ENCODE measurements at regions of chr4 and their contacts with region 1.

Region 1: DNA sequence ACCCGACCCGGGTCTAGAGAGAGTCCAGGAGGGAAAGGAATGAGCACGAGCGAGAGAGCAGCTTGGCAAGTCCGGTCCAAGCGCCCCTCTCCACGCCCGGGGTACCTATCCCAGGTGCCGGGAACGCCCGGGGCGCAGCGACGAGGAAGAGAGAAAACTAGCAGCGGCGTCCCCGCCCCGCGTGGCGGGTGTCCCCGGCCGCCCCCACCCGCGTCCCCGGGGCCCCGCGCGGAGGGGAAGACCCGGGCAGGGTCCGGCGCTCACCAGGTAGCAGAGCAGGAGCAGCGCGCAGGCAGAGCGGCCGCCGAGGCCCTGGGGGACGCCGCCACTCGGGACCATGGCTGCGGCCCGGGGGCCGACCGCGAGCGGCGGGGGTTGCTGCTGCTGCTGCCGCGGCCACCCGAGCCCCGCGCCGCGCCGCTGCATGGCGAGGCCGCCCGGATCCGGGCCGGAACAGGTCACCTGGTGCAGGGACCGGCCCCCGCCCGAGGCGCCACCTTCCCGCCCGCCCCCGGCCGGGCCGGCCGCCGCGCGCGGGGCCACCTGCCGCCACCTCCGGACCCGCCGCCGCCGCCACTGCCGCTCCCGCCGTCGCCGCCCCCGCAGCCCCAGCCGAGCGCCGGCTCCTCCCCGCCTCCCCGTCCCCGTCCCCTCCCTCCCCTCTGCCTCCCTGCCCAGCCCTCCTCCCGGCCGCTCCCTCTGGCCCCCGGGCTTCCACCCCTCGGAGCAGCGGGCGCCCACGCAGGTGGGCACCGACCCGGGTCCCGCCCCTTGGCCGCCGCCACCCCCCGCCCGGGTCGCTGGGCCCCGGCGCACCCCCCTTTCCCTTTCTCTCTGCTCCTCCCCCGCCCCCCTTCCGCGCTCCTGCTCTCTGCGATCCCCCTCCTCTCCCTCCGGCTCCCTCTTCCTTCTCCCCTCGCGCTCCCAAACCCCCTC is at the start of gene SEL1L3:
- DNase-seq: peak; percentile 67
- H3K4me3 ChIP-seq: peak within 1 kb of the TSS; percentile 75
- H3K27ac ChIP-seq: peak within 1 kb of the TSS; percentile 99
- H3K4me1 ChIP-seq: peaks cover 69% of the 10 kb centered on the region
- CTCF ChIP-seq: no peak
- total RNA-seq, gene SEL1L3: 173 and 180 TPM in 2 replicates

Region 2: GRCh38 chr4:25875281-25875745 is 12.6 kb after region 1 on chr4:
- CTCF ChIA-PET with region 1: interaction called, 10 read pairs
- POLR2A ChIA-PET with region 1: interaction called, 134 read pairs
- intact Hi-C with region 1: loop called (anchors 1 kb)
- DNase-seq: peak; percentile 96
- H3K4me3 ChIP-seq: peak overlapping the region; percentile 49
- H3K27ac ChIP-seq: peak overlapping the region; percentile 99
- H3K4me1 ChIP-seq: peaks cover 100% of the 10 kb centered on the region
- CTCF ChIP-seq: no peak

Region 3: GRCh38 chr4:25884031-25884782 is 21.5 kb after region 1 on chr4:
- CTCF ChIA-PET with region 1: interaction called, 10 read pairs
- POLR2A ChIA-PET with region 1: interaction called, 134 read pairs
- intact Hi-C with region 1: no loop called
- DNase-seq: peak; percentile 60
- H3K4me3 ChIP-seq: no peak overlapping the region
- H3K27ac ChIP-seq: no peak overlapping the region
- H3K4me1 ChIP-seq: peaks cover 53% of the 10 kb centered on the region
- CTCF ChIP-seq: no peak

Region 4: GRCh38 chr4:25913851-25914669 is 51.4 kb after region 1 on chr4 and contains the start of gene SMIM20:
- CTCF ChIA-PET with region 1: interaction called, 4 read pairs
- POLR2A ChIA-PET with region 1: interaction called, 43 read pairs
- intact Hi-C with region 1: loop called (anchors 1 kb)
- DNase-seq: peak; percentile 93
- H3K4me3 ChIP-seq: peak within 1 kb of the TSS; percentile 74
- H3K27ac ChIP-seq: peak within 1 kb of the TSS; percentile 78
- H3K4me1 ChIP-seq: peaks cover 26% of the 10 kb centered on the region
- CTCF ChIP-seq: no peak
- total RNA-seq, gene SMIM20: 33.4 and 44.0 TPM in 2 replicates

Region 5: DNA sequence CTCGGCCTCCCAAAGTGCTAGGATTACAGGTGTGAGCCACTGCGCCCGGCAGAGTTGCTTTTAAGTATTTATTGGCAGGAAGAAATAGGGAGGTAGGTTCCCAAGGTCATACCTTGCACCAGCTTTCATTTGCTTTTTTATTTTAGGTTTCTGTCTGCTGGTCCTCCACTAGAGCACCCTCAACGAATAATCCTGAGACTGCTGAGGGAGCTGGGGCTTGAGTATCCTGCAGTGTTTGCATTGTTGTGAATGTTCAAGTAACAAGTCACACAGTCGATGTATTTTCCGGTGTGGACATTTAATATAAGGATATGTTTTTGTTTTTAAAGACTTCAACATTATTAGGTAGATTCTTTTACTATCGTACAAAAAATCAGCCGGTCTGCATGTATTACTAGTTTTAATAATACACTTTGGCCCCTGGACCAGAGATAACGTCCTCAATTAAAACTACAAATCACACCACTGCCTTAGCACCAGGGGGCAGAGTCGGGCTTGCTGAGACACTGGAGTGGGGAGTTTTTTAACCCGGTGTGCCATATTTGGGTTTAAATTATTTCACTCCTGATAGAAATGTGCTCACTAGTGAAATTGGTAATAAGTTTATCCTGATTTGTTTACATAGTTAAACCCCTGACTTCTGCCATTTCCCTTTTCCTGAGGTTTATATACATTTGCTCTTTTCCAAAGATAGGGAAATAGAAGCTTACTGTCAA is 63.0 kb after region 1 on chr4:
- CTCF ChIA-PET with region 1: no interaction called
- POLR2A ChIA-PET with region 1: interaction called, 15 read pairs
- intact Hi-C with region 1: no loop called
- DNase-seq: peak; percentile 59
- H3K4me3 ChIP-seq: no peak overlapping the region
- H3K27ac ChIP-seq: no peak overlapping the region
- H3K4me1 ChIP-seq: peaks cover 18% of the 10 kb centered on the region
- CTCF ChIP-seq: peak; percentile 86

Region 6: GRCh38 chr4:26069218-26069617 is 206.5 kb after region 1 on chr4:
- CTCF ChIA-PET with region 1: no interaction called
- POLR2A ChIA-PET with region 1: no interaction called
- intact Hi-C with region 1: no loop called
- DNase-seq: peak; percentile 25
- H3K4me3 ChIP-seq: no peak overlapping the region
- H3K27ac ChIP-seq: no peak overlapping the region
- H3K4me1 ChIP-seq: no peaks in the 10 kb centered on the region
- CTCF ChIP-seq: peak; percentile 70

Region 7: DNA sequence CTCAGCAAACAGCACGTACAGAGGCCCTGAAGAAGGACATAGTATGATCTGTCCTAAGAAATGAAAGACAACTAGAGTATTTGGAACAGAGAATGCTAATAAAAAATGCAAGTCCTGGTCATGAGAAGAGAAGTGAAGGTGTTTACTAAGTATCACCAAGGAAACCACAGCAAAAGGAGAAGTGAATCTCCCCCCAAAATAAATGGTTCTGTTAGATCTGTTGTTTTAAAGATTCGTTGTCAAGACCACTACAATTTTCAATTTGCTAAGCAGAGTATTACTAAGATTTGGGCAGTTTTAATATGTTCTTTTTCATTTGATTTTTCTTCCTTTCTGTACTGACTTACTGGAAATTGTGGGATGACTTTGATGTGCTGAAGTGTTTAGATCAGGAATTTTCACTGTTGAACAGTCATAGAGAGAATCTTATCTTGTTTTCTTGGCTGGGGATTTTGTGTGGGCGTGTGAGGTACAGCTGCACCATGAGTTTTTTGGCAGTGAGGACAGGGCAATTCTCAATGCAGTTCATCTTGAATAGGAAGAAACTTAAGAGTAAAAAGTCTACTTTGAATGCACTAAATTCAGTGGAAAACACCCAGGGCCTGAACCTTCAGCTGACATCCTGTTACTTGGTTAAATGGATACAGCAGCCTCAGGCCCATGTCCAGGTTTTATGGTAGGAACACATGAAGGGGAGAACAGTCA is 1130.1 kb after region 1 on chr4:
- CTCF ChIA-PET with region 1: no interaction called
- POLR2A ChIA-PET with region 1: interaction called, 4 read pairs
- intact Hi-C with region 1: loop called (anchors 5 kb)
- DNase-seq: peak; percentile 89
- H3K4me3 ChIP-seq: peak overlapping the region; percentile 49
- H3K27ac ChIP-seq: peak overlapping the region; percentile 89
- H3K4me1 ChIP-seq: peaks cover 59% of the 10 kb centered on the region
- CTCF ChIP-seq: no peak

Measured in OCI-LY7 (cell line).